ENCODE measurements at regions of chr10 and their contacts with region 1.

Region 1: DNA sequence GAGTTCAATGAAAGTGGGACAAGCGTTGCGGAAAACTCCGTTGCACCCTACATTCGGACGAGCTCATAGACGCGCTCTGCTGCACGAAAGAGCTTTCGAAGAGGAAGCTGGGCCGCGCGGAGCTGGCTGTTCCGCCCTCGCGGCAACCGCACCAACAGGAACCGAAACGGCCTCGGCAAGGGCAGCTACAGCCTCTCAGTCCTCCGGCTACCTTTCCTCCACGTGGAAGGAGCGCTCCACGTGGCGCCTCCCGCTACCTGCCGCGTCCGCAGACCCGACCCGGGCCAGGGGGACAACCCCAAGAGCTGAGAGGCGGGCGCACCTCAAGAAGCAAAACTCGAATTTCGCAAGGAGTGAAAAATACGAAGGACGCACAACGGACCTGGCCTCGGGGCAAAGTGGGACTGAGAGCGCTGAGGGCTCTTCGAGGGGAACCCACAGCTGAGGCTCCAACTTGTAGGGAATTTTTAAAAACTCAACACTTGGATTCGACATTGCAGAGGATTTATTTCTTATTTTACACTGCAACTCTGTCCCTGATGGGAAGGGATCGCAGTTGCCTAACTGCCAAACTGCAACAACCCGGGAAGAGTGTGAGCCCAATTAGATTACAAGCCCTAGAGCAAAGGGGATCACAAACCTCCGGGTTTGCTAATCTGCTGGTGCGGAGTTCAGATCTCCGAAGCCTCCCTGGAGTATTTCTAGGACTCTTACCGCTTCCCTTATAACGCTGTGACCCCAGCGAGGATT is 1.4 kb downstream of the HPSE2 start:
- DNase-seq: peak; percentile 39
- H3K4me3 ChIP-seq: peak overlapping the region; percentile 21 to 24
- H3K27ac ChIP-seq: peak overlapping the region; percentile 14 to 37
- H3K4me1 ChIP-seq: peaks cover 2% of the 10 kb centered on the region
- H3K27me3 ChIP-seq: peaks cover 29% of the 10 kb centered on the region
- CTCF ChIP-seq: no peak
- POLR2A ChIP-seq: no peak

Region 2: DNA sequence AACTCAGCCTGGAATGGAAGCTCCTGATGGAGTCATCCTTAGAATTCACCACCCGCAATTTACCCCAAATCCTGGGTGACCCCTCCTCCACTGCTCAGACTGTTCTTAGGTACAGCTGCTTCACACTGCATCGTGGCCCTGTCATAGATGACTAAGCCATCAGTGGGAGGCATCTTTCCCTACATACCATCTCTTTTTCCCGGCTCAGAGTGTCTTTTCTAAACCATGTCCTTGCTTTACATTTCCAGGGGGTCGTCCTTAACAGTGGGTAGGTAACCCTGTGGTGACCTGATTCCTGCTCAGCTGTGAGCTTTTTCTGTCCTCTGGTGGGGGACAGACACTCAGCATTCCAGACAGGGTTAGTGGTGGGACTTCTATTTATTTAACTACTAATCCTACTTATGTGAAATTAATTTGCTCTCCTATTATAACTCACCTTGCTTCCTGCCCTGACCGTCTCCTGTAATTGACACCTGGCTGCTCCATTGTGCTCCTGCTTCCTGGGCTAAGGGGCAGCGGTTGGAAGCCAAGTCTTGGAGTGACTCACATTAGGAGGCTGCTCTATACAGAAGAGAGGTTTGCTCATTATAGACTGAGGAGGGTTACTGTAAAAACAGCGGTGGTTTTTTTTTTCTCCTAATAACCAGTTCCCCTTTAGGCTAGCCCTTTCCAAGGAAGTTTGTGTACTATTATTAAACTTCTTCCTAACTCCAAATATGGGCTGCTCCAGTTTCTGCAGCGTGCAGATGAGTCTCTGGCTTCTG is 859.8 kb before region 1 on chr10:
- intact Hi-C with region 1: no loop called
- DNase-seq: no peak
- H3K4me3 ChIP-seq: no peak overlapping the region
- H3K27ac ChIP-seq: no peak overlapping the region
- H3K4me1 ChIP-seq: no peaks in the 10 kb centered on the region
- H3K27me3 ChIP-seq: no peaks in the 10 kb centered on the region
- CTCF ChIP-seq: no peak
- POLR2A ChIP-seq: no peak

Region 3: GRCh38 chr10:98956576-98957260 is 277.5 kb before region 1 on chr10:
- intact Hi-C with region 1: loop called (anchors 10 kb)
- DNase-seq: no peak
- H3K4me3 ChIP-seq: no peak overlapping the region
- H3K27ac ChIP-seq: no peak overlapping the region
- H3K4me1 ChIP-seq: no peaks in the 10 kb centered on the region
- H3K27me3 ChIP-seq: no peaks in the 10 kb centered on the region
- CTCF ChIP-seq: no peak
- POLR2A ChIP-seq: no peak

Region 4: GRCh38 chr10:99084161-99084560 is 150.1 kb before region 1 on chr10:
- intact Hi-C with region 1: loop called (anchors 10 kb)
- DNase-seq: no peak
- H3K4me3 ChIP-seq: no peak overlapping the region
- H3K27ac ChIP-seq: no peak overlapping the region
- H3K4me1 ChIP-seq: no peaks in the 10 kb centered on the region
- H3K27me3 ChIP-seq: no peaks in the 10 kb centered on the region
- CTCF ChIP-seq: no peak
- POLR2A ChIP-seq: no peak